CD14-positive monocyte (primary cell): ENCODE measurements at regions of chr6 and their contacts with region 1.

Region 1: GRCh38 chr6:73752943-73753342 is 56.9 kb downstream of the CD109 start:
- DNase-seq: no peak
- H3K4me3 ChIP-seq: no peak overlapping the region
- H3K4me3 Mint-ChIP-seq: no peak overlapping the region
- H3K27ac ChIP-seq: no peak overlapping the region
- H3K27ac Mint-ChIP-seq: no peak overlapping the region
- H3K4me1 ChIP-seq: peaks cover 0 to 7% of the 10 kb centered on the region in 2 donors
- H3K4me1 Mint-ChIP-seq: no peaks in the 10 kb centered on the region
- H3K27me3 ChIP-seq: no peaks in the 10 kb centered on the region
- H3K27me3 Mint-ChIP-seq: no peaks in the 10 kb centered on the region
- CTCF ChIP-seq: no peak

Region 2: GRCh38 chr6:73580247-73581149 is 172.4 kb before region 1 on chr6:
- intact Hi-C with region 1: no loop called
- DNase-seq: peak; percentile 96 to 97 (median 97)
- H3K4me3 ChIP-seq: peak overlapping the region; percentile 23 to 62 (median 24)
- H3K4me3 Mint-ChIP-seq: peak overlapping the region; percentile 62 to 80
- H3K27ac ChIP-seq: peak overlapping the region; percentile 96 to 99
- H3K27ac Mint-ChIP-seq: peak overlapping the region; percentile 96 to 100 (median 99)
- H3K4me1 ChIP-seq: peaks cover 48 to 59% of the 10 kb centered on the region in 2 donors
- H3K4me1 Mint-ChIP-seq: peaks cover 50% of the 10 kb centered on the region
- H3K27me3 ChIP-seq: no peaks in the 10 kb centered on the region
- H3K27me3 Mint-ChIP-seq: no peaks in the 10 kb centered on the region
- CTCF ChIP-seq: peak; percentile 45

Region 3: GRCh38 chr6:73854998-73855718 is 102.2 kb after region 1 on chr6:
- intact Hi-C with region 1: loop called in 1 of 2 experiments (anchors 10 kb)
- DNase-seq: peak; percentile 51 to 67 (median 60)
- H3K4me3 ChIP-seq: peak overlapping the region in 1 of 3 experiments; percentile 47
- H3K4me3 Mint-ChIP-seq: peak overlapping the region in 1 of 2 donors; percentile 35
- H3K27ac ChIP-seq: no peak overlapping the region
- H3K27ac Mint-ChIP-seq: no peak overlapping the region
- H3K4me1 ChIP-seq: no peaks in the 10 kb centered on the region
- H3K4me1 Mint-ChIP-seq: no peaks in the 10 kb centered on the region
- H3K27me3 ChIP-seq: no peaks in the 10 kb centered on the region
- H3K27me3 Mint-ChIP-seq: peaks cover 0 to 2% (median under 1%) of the 10 kb centered on the region in 3 donors
- CTCF ChIP-seq: peak; percentile 83